CD14-positive monocyte (primary cell): ENCODE measurements at regions of chr2 and their contacts with region 1.

Region 1: DNA sequence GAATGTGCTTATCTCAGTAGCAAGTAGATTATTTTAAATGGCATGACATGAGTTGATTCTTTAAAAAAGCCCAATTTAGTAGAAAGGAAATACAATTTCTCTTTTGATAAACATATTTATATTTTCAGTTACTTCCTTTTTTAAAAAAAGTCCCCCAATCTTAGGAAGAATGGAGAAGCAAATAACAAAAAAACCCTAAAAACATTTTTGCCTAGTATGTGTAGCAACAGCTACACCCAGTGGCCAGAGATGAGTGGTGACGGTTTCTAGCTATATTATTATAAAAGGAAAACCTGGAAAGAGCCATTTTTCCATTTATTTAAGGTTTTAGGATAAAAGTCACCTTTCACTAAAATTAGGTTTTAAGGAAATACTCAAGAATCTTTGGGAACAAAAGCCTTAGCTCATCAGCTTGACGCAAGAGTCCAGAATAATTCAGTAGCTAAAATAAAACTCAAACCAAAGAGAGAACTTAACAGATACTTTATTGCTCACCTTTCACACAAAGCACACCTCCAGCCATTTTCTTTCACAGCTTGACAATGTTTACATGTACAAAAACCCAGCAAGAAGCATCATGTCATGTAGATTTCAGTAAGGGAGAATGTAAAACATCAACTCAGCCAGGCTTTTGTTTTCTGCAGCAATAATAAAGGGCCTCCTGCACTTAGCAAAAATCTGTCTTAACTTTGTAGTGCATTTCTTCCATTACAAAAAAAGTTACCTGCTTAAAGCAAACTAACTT is 15.7 kb downstream of the FAM98A start:
- DNase-seq: peak; percentile 29 to 58 (median 56)
- H3K4me3 ChIP-seq: no peak overlapping the region
- H3K4me3 Mint-ChIP-seq: no peak overlapping the region
- H3K27ac ChIP-seq: no peak overlapping the region
- H3K27ac Mint-ChIP-seq: no peak overlapping the region
- H3K4me1 ChIP-seq: no peaks in the 10 kb centered on the region
- H3K4me1 Mint-ChIP-seq: peaks cover 7% of the 10 kb centered on the region
- H3K27me3 ChIP-seq: no peaks in the 10 kb centered on the region
- H3K27me3 Mint-ChIP-seq: no peaks in the 10 kb centered on the region
- CTCF ChIP-seq: peak; percentile 93

Region 2: GRCh38 chr2:33475224-33476130 is 107.9 kb before region 1 on chr2:
- intact Hi-C with region 1: loop called (anchors 5 to 10 kb)
- DNase-seq: peak; percentile 63 to 75 (median 75)
- H3K4me3 ChIP-seq: peak overlapping the region; percentile 83 to 99 (median 92)
- H3K4me3 Mint-ChIP-seq: peak overlapping the region; percentile 97 to 99
- H3K27ac ChIP-seq: peak overlapping the region; percentile 71 to 91
- H3K27ac Mint-ChIP-seq: peak overlapping the region; percentile 92 to 96 (median 95)
- H3K4me1 ChIP-seq: peaks cover 21 to 25% of the 10 kb centered on the region in 2 donors
- H3K4me1 Mint-ChIP-seq: peaks cover 39% of the 10 kb centered on the region
- H3K27me3 ChIP-seq: no peaks in the 10 kb centered on the region
- H3K27me3 Mint-ChIP-seq: peaks cover 0 to 3% (median 0%) of the 10 kb centered on the region in 3 donors
- CTCF ChIP-seq: peak; percentile 90